AG04450 (cell line): ENCODE measurements at regions of chr9 and their contacts with region 1.

Region 1: DNA sequence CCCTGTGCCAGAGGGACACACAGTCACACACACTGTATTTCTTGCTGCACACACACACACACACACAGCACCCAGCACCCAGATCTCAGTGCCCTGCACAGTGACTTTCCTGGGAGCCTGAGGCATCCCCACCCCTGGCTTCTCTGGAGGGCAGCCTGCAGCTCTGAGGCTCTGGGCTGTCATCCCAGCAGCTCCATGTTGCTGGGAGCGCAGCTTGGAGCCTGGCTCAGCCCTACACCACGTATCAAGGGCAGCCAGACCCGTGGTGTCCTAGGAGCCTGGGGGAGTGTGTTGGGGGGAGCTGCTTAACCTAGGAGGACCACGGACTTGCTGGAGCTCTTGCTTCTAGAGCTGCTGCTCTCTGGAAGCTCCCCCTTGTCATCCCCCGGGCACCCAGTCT is 5.3 kb downstream of the IER5L start:
- DNase-seq: no peak
- H3K4me3 ChIP-seq: no peak overlapping the region
- H3K27ac ChIP-seq: no peak overlapping the region
- H3K27me3 ChIP-seq: no peaks in the 10 kb centered on the region
- CTCF ChIP-seq: no peak

Region 2: DNA sequence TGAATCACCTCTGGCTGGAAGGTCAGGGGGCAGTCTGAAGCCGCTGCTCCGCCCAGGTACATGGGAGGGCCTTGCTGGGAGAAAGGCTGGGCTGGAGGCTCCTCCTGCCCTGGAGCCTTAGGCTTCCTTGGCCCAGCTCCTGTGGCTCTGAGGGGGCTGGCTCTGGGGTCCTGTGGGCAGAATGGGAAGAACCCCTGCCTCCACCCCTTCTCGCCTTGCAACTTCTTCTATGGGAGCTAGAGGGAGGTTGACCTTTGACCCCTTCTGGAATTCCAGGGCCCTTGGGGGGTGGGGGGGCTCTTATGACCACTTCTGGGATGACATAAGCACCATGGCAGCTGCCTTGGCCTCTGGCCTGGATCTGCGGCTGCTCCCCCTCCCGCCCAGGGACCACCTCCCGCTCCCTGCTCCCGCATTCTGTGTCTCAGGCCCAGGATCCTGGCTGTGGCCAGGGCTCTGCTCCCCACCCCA is 26.9 kb before region 1 on chr9:
- CTCF ChIA-PET with region 1: interaction called, 145 read pairs
- POLR2A ChIA-PET with region 1: interaction called, 44 read pairs
- DNase-seq: peak; percentile 86
- H3K4me3 ChIP-seq: no peak overlapping the region
- H3K27ac ChIP-seq: peak overlapping the region; percentile 97
- H3K27me3 ChIP-seq: no peaks in the 10 kb centered on the region
- CTCF ChIP-seq: no peak

Region 3: DNA sequence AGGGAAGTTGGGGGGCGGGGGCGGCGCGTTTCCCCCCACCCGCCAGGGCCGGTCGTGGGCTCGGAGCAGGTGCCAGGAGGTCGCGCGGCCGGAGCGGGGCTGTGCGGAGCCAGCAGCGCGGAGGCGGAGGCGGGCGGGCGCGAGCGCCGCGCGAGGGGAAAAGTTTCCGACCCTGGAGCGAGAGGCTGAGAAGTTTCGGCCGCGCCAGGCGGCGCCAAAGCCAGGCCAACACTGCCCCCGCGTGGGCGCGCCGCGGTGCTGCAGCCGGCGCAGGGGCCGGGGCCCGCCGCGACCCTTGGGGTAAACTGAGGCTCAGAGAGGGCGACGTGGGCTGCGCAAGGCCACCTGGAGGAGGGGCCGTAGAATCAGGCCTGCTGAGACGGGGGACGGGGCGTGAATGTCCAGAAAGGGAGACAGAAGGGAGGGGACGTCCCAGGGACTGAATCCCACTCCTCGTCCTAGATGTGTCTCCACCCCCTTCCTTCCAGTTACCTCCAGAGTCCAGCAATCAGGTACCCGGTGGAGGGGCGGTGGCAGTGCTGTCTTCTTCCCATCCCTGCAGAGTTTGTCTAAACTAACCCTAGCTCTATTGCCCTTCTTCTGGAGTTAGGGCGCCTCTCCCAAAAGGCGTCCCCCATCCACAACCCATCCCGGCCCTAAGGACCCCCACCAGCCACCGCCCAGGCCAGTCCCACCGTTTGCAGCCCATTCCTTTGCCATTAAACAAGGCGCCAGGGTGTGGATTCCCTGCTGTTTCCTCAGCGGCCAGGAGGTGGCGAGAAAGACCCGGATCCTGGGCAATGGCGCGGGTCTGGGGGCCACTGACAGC is 437.9 kb after region 1 on chr9:
- CTCF ChIA-PET with region 1: interaction called, 10 read pairs
- POLR2A ChIA-PET with region 1: interaction called, 5 read pairs
- DNase-seq: no peak
- H3K4me3 ChIP-seq: peak overlapping the region; percentile 68
- H3K27ac ChIP-seq: peak overlapping the region; percentile 47
- H3K27me3 ChIP-seq: no peaks in the 10 kb centered on the region
- CTCF ChIP-seq: peak; percentile 80